ENCODE measurements at regions of chr11 and their contacts with region 1.

Region 1: GRCh38 chr11:61361686-61362541 is at the starts of genes CYB561A3 and TMEM138:
- DNase-seq: peak; percentile 95
- H3K4me3 ChIP-seq: peak within 1 kb of the TSS; percentile 86
- H3K27ac ChIP-seq: peak within 1 kb of the TSS; percentile 89
- H3K4me1 ChIP-seq: peaks cover 45% of the 10 kb centered on the region
- CTCF ChIP-seq: no peak
- total RNA-seq, gene CYB561A3: 21.7 and 28.1 TPM in 2 replicates
- total RNA-seq, gene TMEM138: 25.8 and 31.1 TPM in 2 replicates

Region 2: DNA sequence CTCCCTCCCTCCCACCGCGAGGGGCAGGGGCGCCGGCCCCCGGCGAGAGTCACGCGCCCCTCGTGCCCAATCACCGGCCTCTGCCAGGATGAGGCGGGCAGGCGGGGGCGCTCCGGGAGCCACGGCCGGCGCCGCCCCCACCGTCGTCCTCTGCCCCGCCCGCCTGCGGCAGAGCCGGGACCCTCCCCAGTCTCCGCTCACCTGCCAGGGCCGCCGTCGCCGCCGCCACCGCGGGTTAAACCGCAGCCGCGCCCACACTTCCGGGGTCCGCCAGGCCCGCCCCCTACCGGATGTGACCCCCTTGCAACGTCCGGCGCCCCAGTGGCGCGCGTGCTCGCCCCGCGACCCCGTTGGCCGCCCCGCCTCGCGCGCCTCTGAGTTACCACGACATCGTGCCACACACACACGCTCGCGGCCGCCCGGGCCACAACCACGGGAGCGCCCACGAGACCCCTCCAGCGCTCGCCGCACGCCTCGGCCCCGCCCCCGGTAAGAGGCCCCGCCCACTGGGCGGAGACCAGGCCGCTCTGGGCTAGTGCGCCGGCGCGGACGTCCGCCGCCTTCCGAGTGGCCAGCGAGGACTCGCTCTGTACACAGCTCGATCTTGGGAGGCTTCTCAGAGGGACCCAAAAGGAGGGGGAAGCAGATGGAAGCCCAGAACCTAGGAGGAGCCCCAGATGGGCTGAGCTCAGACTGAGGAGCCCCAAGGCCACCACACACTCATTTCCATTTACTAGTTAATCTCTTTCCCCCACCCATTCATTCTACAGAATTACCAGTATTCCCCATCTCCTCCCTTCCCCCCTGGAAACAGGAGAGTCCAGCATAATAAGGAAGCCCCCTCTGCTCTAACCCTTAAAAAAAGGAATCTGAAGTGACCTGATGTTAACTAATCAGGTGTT is 200.5 kb before region 1 on chr11 and contains the start of gene VPS37C:
- CTCF ChIA-PET with region 1: no interaction called
- POLR2A ChIA-PET with region 1: interaction called, 6 read pairs
- intact Hi-C with region 1: loop called (anchors 1 kb)
- DNase-seq: peak; percentile 92
- H3K4me3 ChIP-seq: peak within 1 kb of the TSS; percentile 85
- H3K27ac ChIP-seq: peak within 1 kb of the TSS; percentile 82
- H3K4me1 ChIP-seq: peaks cover 28% of the 10 kb centered on the region
- CTCF ChIP-seq: no peak
- total RNA-seq, gene VPS37C: 10.2 and 10.3 TPM in 2 replicates

Region 3: DNA sequence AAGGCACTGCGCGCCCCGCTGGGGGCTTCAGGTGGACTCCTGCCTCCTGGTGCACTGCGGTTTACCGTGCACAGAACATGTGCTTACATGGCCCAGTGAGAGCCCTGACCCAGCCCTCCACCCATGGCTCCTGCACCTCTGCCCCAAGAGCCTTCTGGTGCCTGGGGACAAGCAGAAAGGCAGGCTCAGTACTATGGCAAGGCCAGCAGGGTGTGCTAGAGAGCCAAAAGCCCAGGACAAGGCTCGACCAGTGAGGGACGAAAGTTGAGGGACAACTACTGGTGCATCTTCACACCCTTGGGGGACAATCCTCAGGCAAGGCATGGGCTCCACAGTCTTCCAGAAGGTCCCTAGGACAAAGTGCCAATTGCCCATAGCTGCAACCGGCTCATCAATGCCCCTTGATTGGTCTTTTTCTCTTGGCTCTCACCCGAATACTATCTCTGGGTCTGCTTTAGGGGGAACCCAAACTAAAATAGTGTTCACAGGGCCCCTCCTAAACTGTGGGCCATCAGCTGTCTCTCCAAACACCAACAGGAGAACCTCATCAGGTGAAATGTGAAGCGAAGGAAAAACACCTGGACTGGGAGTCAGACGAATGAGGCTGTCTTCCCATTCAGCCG is 107.4 kb before region 1 on chr11:
- CTCF ChIA-PET with region 1: no interaction called
- POLR2A ChIA-PET with region 1: no interaction called
- intact Hi-C with region 1: no loop called
- DNase-seq: peak; percentile 69
- H3K4me3 ChIP-seq: no peak overlapping the region
- H3K27ac ChIP-seq: no peak overlapping the region
- H3K4me1 ChIP-seq: no peaks in the 10 kb centered on the region
- CTCF ChIP-seq: peak; percentile 85

Region 4: DNA sequence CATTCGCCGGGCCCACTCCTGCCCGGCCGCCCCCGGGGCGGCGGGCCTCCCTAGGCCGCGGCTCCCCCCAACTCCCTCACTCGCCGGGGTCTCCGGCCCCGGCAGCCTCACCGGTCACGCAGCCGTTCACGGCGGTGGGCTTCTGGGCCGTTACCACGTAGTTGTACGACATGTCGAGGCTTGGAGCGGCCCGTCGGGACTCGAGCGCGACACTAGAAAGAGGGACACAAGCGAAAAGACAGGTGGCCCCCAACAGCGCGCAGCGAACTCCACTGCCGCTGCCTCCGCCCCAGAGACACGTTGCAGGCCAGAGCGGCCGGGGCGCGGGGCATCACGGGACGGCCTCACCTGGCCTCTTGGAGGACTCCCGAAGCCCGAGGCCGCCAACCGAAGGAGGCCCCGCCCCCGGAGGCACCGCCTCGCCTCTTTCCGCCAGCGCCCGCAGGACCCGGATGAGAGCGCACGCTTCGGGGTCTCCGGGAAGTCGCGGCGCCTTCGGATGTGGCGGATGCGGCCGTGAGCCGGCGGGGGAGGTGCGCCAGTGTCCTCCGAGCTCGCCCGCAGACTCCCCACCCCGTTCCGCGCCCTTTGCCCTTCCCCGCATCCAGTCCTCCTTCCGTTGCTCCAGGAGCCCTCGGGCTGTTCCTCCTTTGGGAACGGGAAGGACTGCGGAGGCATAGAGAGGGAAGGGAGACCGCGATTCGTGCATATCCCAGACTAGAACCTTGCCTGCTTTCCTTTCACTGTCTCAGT is 28.9 kb before region 1 on chr11 and contains the starts of genes DDB1 and TKFC:
- CTCF ChIA-PET with region 1: interaction called, 19 read pairs
- POLR2A ChIA-PET with region 1: interaction called, 80 read pairs
- intact Hi-C with region 1: loop called (anchors 1 kb)
- DNase-seq: peak; percentile 96
- H3K4me3 ChIP-seq: peak within 1 kb of the TSS; percentile 98
- H3K27ac ChIP-seq: peak within 1 kb of the TSS; percentile 79
- H3K4me1 ChIP-seq: peaks cover 44% of the 10 kb centered on the region
- CTCF ChIP-seq: no peak
- total RNA-seq, gene DDB1: 194 and 218 TPM in 2 replicates
- total RNA-seq, gene TKFC: 75.3 and 77.8 TPM in 2 replicates

Region 5: GRCh38 chr11:61384271-61385242 is 22.6 kb after region 1 on chr11:
- CTCF ChIA-PET with region 1: interaction called, 5 read pairs
- POLR2A ChIA-PET with region 1: interaction called, 10 read pairs
- intact Hi-C with region 1: no loop called
- DNase-seq: peak; percentile 18
- H3K4me3 ChIP-seq: no peak overlapping the region
- H3K27ac ChIP-seq: no peak overlapping the region
- H3K4me1 ChIP-seq: no peaks in the 10 kb centered on the region
- CTCF ChIP-seq: no peak; the same call in 1 of the 2 replicates

Region 6: GRCh38 chr11:61429691-61430582 is 68.0 kb after region 1 on chr11 and contains the starts of genes CPSF7 and SDHAF2:
- CTCF ChIA-PET with region 1: no interaction called
- POLR2A ChIA-PET with region 1: interaction called, 10 read pairs
- intact Hi-C with region 1: loop called (anchors 5 kb)
- DNase-seq: peak; percentile 98
- H3K4me3 ChIP-seq: peak within 1 kb of the TSS; percentile 94
- H3K27ac ChIP-seq: peak within 1 kb of the TSS; percentile 89
- H3K4me1 ChIP-seq: peaks cover 37% of the 10 kb centered on the region
- CTCF ChIP-seq: no peak
- total RNA-seq, gene CPSF7: 56.1 and 69.4 TPM in 2 replicates
- total RNA-seq, gene SDHAF2: 40.6 and 41.2 TPM in 2 replicates

Region 7: GRCh38 chr11:61477727-61478148 is 115.8 kb after region 1 on chr11:
- CTCF ChIA-PET with region 1: no interaction called
- POLR2A ChIA-PET with region 1: no interaction called
- intact Hi-C with region 1: no loop called
- DNase-seq: peak; percentile 52
- H3K4me3 ChIP-seq: no peak overlapping the region
- H3K27ac ChIP-seq: no peak overlapping the region
- H3K4me1 ChIP-seq: no peaks in the 10 kb centered on the region
- CTCF ChIP-seq: peak; percentile 93

Measured in OCI-LY7 (cell line).